ENCODE measurements at regions of chr3 and their contacts with region 1.

Region 1: GRCh38 chr3:172648747-172649146 is 62.1 kb downstream of the NCEH1 start:
- DNase-seq: no peak
- H3K4me3 ChIP-seq: no peak overlapping the region
- H3K27ac ChIP-seq: no peak overlapping the region
- H3K4me1 ChIP-seq: peaks cover 0 to 2% (median 2%) of the 10 kb centered on the region in 4 experiments; a peak in 2 of 7 replicates
- H3K27me3 ChIP-seq: no peaks in the 10 kb centered on the region
- CTCF ChIP-seq: no peak
- EP300 ChIP-seq: no peak
- POLR2A ChIP-seq: no peak
- RAD21 ChIP-seq: no peak

Region 2: DNA sequence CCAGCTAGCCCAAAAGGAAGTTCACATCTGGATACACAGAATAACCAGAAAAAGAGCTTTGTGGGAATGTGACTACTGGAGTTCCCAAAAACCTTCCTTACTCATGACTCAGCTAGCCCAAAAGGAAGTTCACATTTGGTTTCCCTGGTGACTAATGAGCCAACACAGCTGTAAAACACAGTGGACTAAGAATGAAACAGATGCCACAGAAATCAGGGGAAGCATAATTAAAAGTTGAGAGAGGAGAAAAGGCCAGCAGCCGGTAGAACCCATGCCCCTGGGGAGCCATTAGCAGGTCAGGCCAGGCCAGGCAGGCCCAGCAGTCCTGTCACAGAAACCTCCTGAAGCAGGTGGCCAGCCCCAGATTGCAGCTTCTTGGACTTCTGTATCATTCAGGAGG is 330.8 kb before region 1 on chr3:
- CTCF ChIA-PET with region 1: no interaction called
- POLR2A ChIA-PET with region 1: no interaction called
- DNase-seq: no peak
- H3K4me3 ChIP-seq: no peak overlapping the region
- H3K27ac ChIP-seq: no peak overlapping the region
- H3K4me1 ChIP-seq: peaks cover 0 to 9% (median 0%) of the 10 kb centered on the region in 4 experiments; a peak in 1 of 7 replicates
- H3K27me3 ChIP-seq: no peaks in the 10 kb centered on the region
- CTCF ChIP-seq: no peak
- EP300 ChIP-seq: no peak
- POLR2A ChIP-seq: no peak
- RAD21 ChIP-seq: no peak

Region 3: GRCh38 chr3:172666873-172667694 is 18.3 kb after region 1 on chr3:
- CTCF ChIA-PET with region 1: interaction called, 25 read pairs
- POLR2A ChIA-PET with region 1: no interaction called
- DNase-seq: peak in 1 of 2 experiments; percentile 89
- H3K4me3 ChIP-seq: no peak overlapping the region
- H3K27ac ChIP-seq: no peak overlapping the region
- H3K4me1 ChIP-seq: no peaks in the 10 kb centered on the region
- H3K27me3 ChIP-seq: no peaks in the 10 kb centered on the region
- CTCF ChIP-seq: peak in 2 of 3 experiments; percentile 91 to 97; a peak in 3 of 4 replicates
- EP300 ChIP-seq: no peak
- POLR2A ChIP-seq: no peak
- RAD21 ChIP-seq: peak; percentile 95 to 98

Measured in H1 (cell line).